ENCODE measurements at regions of chr2 and their contacts with region 1.

Region 1: GRCh38 chr2:25606892-25607291 is 66.5 kb downstream of the DTNB start:
- DNase-seq: no peak
- ATAC-seq: 0 out of 3 replicates have a peak, but pooled peaks have one; percentile 29
- H3K4me3 ChIP-seq: no peak overlapping the region
- H3K27ac ChIP-seq: no peak overlapping the region
- H3K4me1 ChIP-seq: peaks cover 8% of the 10 kb centered on the region
- H3K27me3 ChIP-seq: no peaks in the 10 kb centered on the region
- CTCF ChIP-seq: peak; percentile 44 to 74 (median 51)
- EP300 ChIP-seq: no peak
- POLR2A ChIP-seq: no peak
- RAD21 ChIP-seq: peak; percentile 83

Region 2: GRCh38 chr2:25215948-25216679 is 390.8 kb before region 1 on chr2:
- CTCF ChIA-PET with region 1: interaction called, 3 read pairs
- POLR2A ChIA-PET with region 1: no interaction called
- RAD21 ChIA-PET with region 1: no interaction called
- SMC1A ChIA-PET with region 1: no interaction called
- in situ Hi-C with region 1: no loop called
- intact Hi-C with region 1: loop called (anchors 5 kb)
- DNase-seq: no peak
- ATAC-seq: peak; percentile 89
- H3K4me3 ChIP-seq: peak overlapping the region; percentile 65; the same call in 1 of the 2 replicates
- H3K27ac ChIP-seq: peak overlapping the region; percentile 29; the same call in 1 of the 2 replicates
- H3K4me1 ChIP-seq: peaks cover under 1% of the 10 kb centered on the region
- H3K27me3 ChIP-seq: no peaks in the 10 kb centered on the region
- CTCF ChIP-seq: no peak
- EP300 ChIP-seq: no peak
- POLR2A ChIP-seq: peak; percentile 83
- RAD21 ChIP-seq: no peak

Region 3: DNA sequence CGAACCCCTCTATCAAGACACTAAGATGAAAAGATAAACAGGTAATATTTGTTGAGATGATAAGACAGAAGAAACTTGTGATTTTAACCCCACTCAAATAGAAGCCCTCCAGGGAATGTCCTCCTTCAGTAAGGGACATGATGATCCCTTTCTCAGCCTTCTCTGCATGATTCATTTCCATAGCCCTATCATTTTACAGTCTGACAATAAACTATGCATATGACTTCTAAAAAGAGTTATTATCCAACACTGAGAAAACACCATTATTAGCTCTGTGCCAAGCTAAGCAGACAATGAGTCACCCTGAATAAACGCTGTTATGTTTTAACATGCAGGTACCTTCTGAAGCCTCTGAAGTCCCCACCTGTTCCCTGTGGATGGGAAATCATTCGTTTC is 11.7 kb after region 1 on chr2:
- CTCF ChIA-PET with region 1: interaction called, 19 read pairs
- POLR2A ChIA-PET with region 1: no interaction called
- RAD21 ChIA-PET with region 1: interaction called, 10 read pairs
- SMC1A ChIA-PET with region 1: interaction called, 28 read pairs
- in situ Hi-C with region 1: no loop called
- intact Hi-C with region 1: no loop called
- DNase-seq: no peak
- ATAC-seq: no peak
- H3K4me3 ChIP-seq: no peak overlapping the region
- H3K27ac ChIP-seq: no peak overlapping the region
- H3K4me1 ChIP-seq: no peaks in the 10 kb centered on the region
- H3K27me3 ChIP-seq: no peaks in the 10 kb centered on the region
- CTCF ChIP-seq: no peak
- EP300 ChIP-seq: no peak
- POLR2A ChIP-seq: no peak
- RAD21 ChIP-seq: no peak

Region 4: DNA sequence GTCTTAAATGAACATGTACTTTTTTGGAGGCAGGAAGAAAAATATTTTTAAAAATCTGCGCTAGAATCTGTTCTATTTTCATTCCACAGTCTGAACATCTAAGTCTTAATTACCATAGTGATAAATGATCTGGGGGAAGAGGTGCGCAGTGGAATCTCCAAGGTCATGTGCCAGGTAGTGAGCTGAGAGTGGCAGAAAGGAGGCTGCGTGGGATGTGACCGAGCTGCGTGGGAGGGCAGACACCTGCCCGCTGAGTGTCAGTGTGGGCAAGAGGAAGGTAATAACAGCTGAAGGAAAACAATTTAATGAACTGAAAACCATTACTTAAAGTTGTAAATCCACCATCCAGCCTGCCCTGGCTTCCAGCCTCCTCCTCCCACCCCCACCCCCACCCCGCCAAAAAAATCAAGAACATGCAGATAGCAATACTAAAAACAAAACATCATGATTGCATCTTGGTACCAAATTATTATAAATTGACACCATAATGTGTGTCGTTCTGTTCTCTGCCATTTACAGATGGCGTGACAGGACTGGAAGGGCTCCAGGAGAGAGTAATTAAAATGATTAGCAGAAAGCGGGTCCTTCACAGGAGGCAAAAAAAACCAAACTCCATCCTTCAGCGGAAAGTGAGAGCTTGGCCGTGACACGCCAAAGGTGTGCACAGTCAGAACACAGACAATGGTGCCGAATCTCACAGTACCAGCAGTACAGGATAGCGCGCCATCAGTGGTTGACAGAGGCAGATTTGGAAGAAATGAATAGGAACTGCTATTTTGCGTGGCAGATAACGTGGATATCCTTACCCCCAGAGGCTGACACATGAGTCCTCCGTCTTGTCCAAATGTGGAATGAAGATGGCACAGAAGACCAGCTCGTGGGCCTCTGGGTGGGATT is 77.9 kb after region 1 on chr2:
- CTCF ChIA-PET with region 1: interaction called, 12 read pairs
- POLR2A ChIA-PET with region 1: no interaction called
- RAD21 ChIA-PET with region 1: interaction called, 4 read pairs
- SMC1A ChIA-PET with region 1: interaction called, 3 read pairs
- in situ Hi-C with region 1: no loop called
- intact Hi-C with region 1: no loop called
- DNase-seq: no peak
- ATAC-seq: no peak
- H3K4me3 ChIP-seq: no peak overlapping the region
- H3K27ac ChIP-seq: no peak overlapping the region
- H3K4me1 ChIP-seq: no peaks in the 10 kb centered on the region
- H3K27me3 ChIP-seq: no peaks in the 10 kb centered on the region
- CTCF ChIP-seq: no peak
- EP300 ChIP-seq: no peak
- POLR2A ChIP-seq: no peak
- RAD21 ChIP-seq: no peak

Region 5: GRCh38 chr2:25707927-25708590 is 101.2 kb after region 1 on chr2:
- CTCF ChIA-PET with region 1: interaction called, 23 read pairs
- POLR2A ChIA-PET with region 1: interaction called, 4 read pairs
- RAD21 ChIA-PET with region 1: interaction called, 3 read pairs
- SMC1A ChIA-PET with region 1: interaction called, 72 read pairs
- in situ Hi-C with region 1: no loop called
- intact Hi-C with region 1: no loop called
- DNase-seq: no peak
- ATAC-seq: peak; percentile 67
- H3K4me3 ChIP-seq: no peak overlapping the region
- H3K27ac ChIP-seq: no peak overlapping the region
- H3K4me1 ChIP-seq: peaks cover 6% of the 10 kb centered on the region
- H3K27me3 ChIP-seq: no peaks in the 10 kb centered on the region
- CTCF ChIP-seq: no peak
- EP300 ChIP-seq: no peak
- POLR2A ChIP-seq: no peak
- RAD21 ChIP-seq: no peak

Region 6: GRCh38 chr2:25851740-25852503 is 245.0 kb after region 1 on chr2:
- CTCF ChIA-PET with region 1: interaction called, 53 read pairs
- POLR2A ChIA-PET with region 1: no interaction called
- RAD21 ChIA-PET with region 1: interaction called, 26 read pairs
- SMC1A ChIA-PET with region 1: interaction called, 28 read pairs
- in situ Hi-C with region 1: no loop called
- intact Hi-C with region 1: no loop called
- DNase-seq: peak; percentile 57
- ATAC-seq: peak; percentile 99
- H3K4me3 ChIP-seq: no peak overlapping the region
- H3K27ac ChIP-seq: no peak overlapping the region
- H3K4me1 ChIP-seq: peaks cover 9% of the 10 kb centered on the region
- H3K27me3 ChIP-seq: no peaks in the 10 kb centered on the region
- CTCF ChIP-seq: peak; percentile 46 to 79 (median 70); a peak in 5 of 6 replicates
- EP300 ChIP-seq: peak in 1 of 2 experiments; percentile 60; a peak in 2 of 4 replicates
- POLR2A ChIP-seq: no peak
- RAD21 ChIP-seq: peak; percentile 69